Gastrocnemius medialis (tissue), 4 donors: ENCODE measurements at regions of chr17 and their contacts with region 1.

Region 1: DNA sequence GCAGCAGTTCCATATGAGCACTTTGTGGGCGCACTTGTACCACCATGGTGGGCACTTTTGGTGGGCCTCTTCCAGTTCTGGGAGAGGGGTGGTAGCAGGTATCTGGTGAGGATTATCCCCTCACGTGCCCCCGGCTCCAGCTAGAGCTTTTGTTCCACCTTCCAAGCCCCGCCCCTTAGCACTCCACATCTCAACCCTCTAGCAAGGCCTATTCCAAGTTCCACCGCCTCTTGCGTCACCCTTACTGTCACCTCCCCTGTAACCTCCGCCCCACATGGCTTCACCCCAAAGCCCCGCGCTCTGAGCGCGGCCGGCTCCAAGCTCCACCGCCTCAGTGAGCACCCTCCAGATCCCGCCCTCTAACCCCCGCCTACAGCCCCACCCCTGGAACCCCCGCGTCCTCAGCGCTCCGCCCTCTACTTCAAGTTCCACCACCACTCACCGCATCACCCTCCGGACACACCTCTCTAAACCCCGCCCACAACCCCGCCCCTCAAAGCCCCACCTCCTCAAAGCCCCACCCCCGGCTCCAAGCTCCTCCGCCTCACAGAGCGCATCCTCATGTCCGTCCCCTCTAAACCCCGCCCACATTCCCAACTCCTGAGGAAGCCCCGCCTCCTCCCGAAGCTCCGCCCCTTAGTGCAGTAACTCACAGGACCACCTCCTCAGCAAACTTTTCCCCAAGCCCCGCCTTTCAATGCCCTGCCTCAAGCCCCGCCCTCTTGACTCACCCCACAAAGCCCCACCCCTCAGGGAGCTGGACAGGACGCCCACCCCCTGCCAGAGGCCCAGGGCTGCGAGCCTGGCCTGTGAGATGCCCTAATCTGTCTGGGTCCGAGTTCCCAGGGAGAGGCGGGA is 11.1 kb downstream of the SCN4A start:
- DNase-seq: peak; percentile 84 to 94
- ATAC-seq: peak; percentile 63 to 65
- H3K4me3 ChIP-seq: peak overlapping the region in 3 of 4 donors; percentile 24 to 28 (median 25)
- H3K27ac ChIP-seq: peak overlapping the region; percentile 96 to 100 (median 99)
- H3K4me1 ChIP-seq: peaks cover 65 to 66% of the 10 kb centered on the region in 2 donors
- H3K27me3 ChIP-seq: no peaks in the 10 kb centered on the region
- CTCF ChIP-seq: no peak
- POLR2A ChIP-seq: peak; percentile 27 to 56

Region 2: GRCh38 chr17:63665527-63666214 is 295.9 kb before region 1 on chr17:
- in situ Hi-C with region 1: no loop called
- intact Hi-C with region 1: no loop called
- DNase-seq: no peak
- ATAC-seq: peak in 1 of 2 donors; percentile 30
- H3K4me3 ChIP-seq: no peak overlapping the region
- H3K27ac ChIP-seq: peak overlapping the region in 1 of 4 donors; percentile 17
- H3K4me1 ChIP-seq: peaks cover 0 to 10% of the 10 kb centered on the region in 2 donors
- H3K27me3 ChIP-seq: no peaks in the 10 kb centered on the region
- CTCF ChIP-seq: no peak
- POLR2A ChIP-seq: no peak

Region 3: DNA sequence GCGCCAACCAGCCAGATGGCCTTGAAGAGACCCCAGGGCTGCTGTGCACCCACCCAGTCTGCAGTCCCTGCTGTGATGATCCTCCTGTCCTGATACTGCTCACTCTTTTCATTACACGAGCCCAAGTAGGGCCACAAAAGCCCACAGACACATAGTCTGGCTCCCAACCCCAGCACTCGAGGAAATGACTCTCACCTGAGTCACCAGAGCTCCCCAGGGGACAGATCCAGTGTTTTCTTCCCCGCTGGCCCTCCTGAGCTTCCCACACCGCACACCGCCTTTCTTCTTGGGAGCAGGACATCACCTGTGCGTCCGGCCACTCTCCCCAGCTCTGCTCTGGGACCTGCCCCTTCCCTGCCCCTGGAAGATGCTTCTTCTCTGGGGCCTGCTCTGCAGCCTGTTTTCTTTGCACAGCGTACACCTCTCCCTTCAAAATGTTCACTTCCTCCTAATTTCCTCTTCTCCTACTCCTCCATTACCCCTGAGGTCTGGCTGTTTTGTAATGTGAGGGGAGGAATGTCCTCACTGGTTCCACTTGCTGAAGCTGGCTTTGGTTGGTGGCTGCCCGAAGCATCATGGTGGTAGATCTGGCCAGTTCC is 13.1 kb after region 1 on chr17:
- in situ Hi-C with region 1: no loop called
- intact Hi-C with region 1: loop called (anchors 1 kb)
- DNase-seq: peak; percentile 84 to 87
- ATAC-seq: peak; percentile 68 to 77
- H3K4me3 ChIP-seq: no peak overlapping the region
- H3K27ac ChIP-seq: peak overlapping the region; percentile 98 to 100 (median 99)
- H3K4me1 ChIP-seq: peaks cover 72% of the 10 kb centered on the region in 2 donors
- H3K27me3 ChIP-seq: no peaks in the 10 kb centered on the region
- CTCF ChIP-seq: no peak
- POLR2A ChIP-seq: peak; percentile 47 to 55

Region 4: DNA sequence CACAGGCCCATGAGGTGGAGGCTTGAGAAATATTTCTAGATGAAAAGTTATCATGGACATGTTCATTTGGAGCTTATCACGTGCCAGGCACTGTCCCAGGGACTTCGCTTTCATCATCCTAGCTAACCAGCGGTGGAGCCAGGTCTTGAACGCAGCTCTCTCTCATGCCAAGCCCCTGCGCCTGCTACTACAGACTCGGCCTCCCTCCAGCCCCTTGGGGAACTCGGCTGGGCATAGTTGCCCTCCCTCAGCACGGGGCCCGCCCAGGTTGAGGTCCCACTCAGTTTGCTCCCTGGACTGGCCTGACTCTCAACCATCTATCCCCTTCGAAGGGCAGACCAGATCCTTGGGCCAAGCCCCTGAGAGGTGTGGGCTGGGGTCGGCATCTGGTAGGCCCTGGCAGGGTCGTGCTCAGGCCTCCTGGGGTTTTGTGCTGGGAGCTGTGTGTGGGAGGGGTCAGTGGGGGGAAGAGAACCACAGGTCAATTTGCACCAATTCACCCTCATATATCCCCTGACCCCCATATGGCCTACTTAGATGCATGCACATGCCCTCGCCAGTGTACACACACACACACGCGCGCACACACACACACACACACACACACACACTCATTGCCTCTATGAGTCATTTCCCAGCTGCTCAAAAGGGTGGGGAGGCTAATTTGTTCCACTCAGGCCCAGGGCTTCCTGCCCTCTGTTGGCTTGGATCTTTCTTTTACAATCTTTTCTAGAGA is 23.2 kb after region 1 on chr17:
- in situ Hi-C with region 1: no loop called
- intact Hi-C with region 1: loop called (anchors 1 kb)
- DNase-seq: peak; percentile 84 to 94
- ATAC-seq: peak; percentile 54 to 55
- H3K4me3 ChIP-seq: peak overlapping the region in 2 of 4 donors; percentile 4 to 23
- H3K27ac ChIP-seq: peak overlapping the region; percentile 98 to 100 (median 99)
- H3K4me1 ChIP-seq: peaks cover 75 to 76% of the 10 kb centered on the region in 2 donors
- H3K27me3 ChIP-seq: no peaks in the 10 kb centered on the region
- CTCF ChIP-seq: peak in 1 of 5 experiments; percentile 3
- POLR2A ChIP-seq: peak; percentile 36 to 44